Spleen (tissue), 13 donors: ENCODE measurements at regions of chr4 and their contacts with region 1.

Region 1: DNA sequence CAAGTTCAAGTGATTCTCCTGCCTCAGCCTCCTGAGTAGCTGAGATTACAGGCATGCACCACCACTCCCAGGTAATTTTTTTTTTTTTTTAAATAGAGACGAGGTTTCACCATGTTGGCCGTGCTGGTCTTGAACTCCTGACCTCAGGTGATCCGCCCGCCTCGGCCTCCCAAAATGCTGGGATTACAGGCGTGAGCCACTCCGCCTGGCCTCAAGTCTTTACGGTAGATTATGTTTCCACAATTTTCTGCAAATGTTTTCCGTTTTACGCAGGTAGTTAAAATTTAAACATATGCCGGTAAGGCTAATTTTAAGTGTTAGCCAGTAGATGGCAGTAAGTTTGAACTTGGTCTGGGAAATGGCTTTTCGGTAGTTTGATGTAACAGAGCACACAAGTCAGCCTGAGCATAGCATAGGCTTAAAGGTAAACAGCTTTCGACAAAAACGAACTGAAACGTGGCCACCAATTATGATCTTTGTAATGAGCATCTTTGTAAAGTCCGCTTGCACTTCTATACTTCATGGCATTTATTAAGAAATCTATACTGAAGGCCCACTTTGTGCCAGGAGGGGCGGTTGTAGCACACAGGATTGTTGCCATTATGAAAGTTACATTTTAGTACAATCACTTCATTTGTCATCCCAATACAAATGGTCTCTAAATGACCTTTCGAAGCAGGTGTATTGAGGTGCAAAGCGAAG is 31.1 kb downstream of the CCKAR start:
- DNase-seq: no peak
- H3K4me3 ChIP-seq: peak overlapping the region in 1 of 8 donors; percentile 39
- H3K27ac ChIP-seq: no peak overlapping the region
- H3K4me1 ChIP-seq: peaks cover 0 to 8% (median 3%) of the 10 kb centered on the region in 6 donors
- H3K27me3 ChIP-seq: no peaks in the 10 kb centered on the region
- CTCF ChIP-seq: peak in 8 of 11 experiments; percentile 34 to 64 (median 55)
- POLR2A ChIP-seq: no peak

Region 2: GRCh38 chr4:27010334-27010940 is 551.2 kb after region 1 on chr4:
- intact Hi-C with region 1: loop called (anchors 5 kb)
- DNase-seq: peak; percentile 77
- H3K4me3 ChIP-seq: no peak overlapping the region
- H3K27ac ChIP-seq: peak overlapping the region in 2 of 8 donors; percentile 30 to 32
- H3K4me1 ChIP-seq: peaks cover 0 to 22% (median 12%) of the 10 kb centered on the region in 6 donors
- H3K27me3 ChIP-seq: no peaks in the 10 kb centered on the region
- CTCF ChIP-seq: peak; percentile 70 to 94 (median 85)
- POLR2A ChIP-seq: no peak